ENCODE measurements at regions of chr1 and their contacts with region 1.

Region 1: GRCh38 chr1:234544087-234544579 is 65.2 kb upstream of the TARBP1 start:
- DNase-seq: peak in 1 of 2 experiments; percentile 58
- ATAC-seq: peak; percentile 65 to 68
- H3K4me3 ChIP-seq: no peak overlapping the region
- H3K27ac ChIP-seq: peak overlapping the region; percentile 57 to 73
- H3K4me1 ChIP-seq: peaks cover 53% of the 10 kb centered on the region
- CTCF ChIP-seq: no peak
- EP300 ChIP-seq: no peak
- POLR2A ChIP-seq: no peak
- RAD21 ChIP-seq: no peak

Region 2: DNA sequence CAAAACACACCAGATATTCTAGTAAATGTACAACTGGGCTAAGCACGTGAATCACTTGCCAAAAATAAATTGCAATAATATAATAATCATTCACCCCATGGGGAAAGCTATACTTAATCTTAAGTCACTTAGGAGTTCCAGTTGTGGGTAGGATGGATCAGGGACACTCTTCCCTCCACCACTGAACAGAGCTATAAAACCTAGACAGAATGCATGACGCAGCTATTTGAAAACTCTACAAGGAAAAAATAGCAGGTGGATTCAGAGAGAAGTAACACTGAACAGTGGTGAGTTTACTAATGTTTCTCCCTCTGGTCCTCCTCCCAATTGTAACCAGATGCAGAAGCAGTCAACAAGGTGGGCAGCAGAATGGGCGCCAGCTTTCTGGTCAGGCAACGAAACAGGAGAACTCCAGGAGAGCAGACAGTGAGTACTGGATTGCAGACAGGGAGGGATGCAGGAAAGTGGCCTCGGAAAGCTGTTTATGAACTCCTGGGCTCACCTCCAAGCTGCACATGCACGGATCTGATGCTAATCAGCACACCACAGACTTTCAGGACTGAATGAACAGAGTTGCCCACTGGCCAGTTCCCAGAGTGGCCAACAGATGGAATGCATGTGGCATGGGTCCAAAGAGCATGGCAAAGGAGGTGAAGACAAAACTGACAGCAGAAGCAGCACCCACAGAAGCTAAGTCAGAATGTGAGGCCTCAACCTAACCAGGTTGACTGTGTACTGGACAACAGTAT is 106.5 kb before region 1 on chr1:
- CTCF ChIA-PET with region 1: no interaction called
- POLR2A ChIA-PET with region 1: no interaction called
- DNase-seq: no peak
- ATAC-seq: no peak; a peak in 1 of 6 replicates
- H3K4me3 ChIP-seq: no peak overlapping the region
- H3K27ac ChIP-seq: no peak overlapping the region
- H3K4me1 ChIP-seq: peaks cover 9% of the 10 kb centered on the region; the same call in 2 of the 3 replicates
- CTCF ChIP-seq: no peak
- EP300 ChIP-seq: no peak
- POLR2A ChIP-seq: no peak
- RAD21 ChIP-seq: no peak

Region 3: GRCh38 chr1:234558016-234558836 is 14.1 kb after region 1 on chr1:
- CTCF ChIA-PET with region 1: interaction called, 25 read pairs
- POLR2A ChIA-PET with region 1: no interaction called
- DNase-seq: no peak
- ATAC-seq: no peak
- H3K4me3 ChIP-seq: no peak overlapping the region
- H3K27ac ChIP-seq: no peak overlapping the region
- H3K4me1 ChIP-seq: peaks cover 7% of the 10 kb centered on the region
- CTCF ChIP-seq: no peak
- EP300 ChIP-seq: no peak
- POLR2A ChIP-seq: no peak
- RAD21 ChIP-seq: no peak

Region 4: DNA sequence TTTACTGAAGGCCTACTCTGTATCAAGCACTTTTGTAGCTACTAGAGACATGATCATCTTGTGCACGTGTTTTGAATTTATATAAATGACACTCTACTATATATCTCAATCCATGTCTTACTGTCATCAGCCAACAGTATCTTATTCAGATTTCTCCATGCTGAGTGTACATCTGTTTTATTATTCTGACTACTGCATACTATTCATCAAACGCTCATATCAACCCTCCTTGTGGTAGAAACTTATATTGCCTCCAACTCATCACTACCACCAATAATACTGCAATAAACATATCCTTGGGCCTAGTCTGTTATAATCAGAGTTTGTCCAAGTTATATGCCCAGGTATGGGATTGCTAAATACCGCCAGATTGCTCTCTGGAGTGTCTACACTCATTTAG is 147.4 kb after region 1 on chr1:
- CTCF ChIA-PET with region 1: no interaction called
- POLR2A ChIA-PET with region 1: no interaction called
- DNase-seq: peak; percentile 22 to 45
- ATAC-seq: peak; percentile 76 to 77; a peak in 5 of 6 replicates
- H3K4me3 ChIP-seq: no peak overlapping the region
- H3K27ac ChIP-seq: no peak overlapping the region
- H3K4me1 ChIP-seq: no peaks in the 10 kb centered on the region
- CTCF ChIP-seq: no peak
- EP300 ChIP-seq: no peak
- POLR2A ChIP-seq: no peak
- RAD21 ChIP-seq: peak in 1 of 2 experiments; percentile 30; a peak in 1 of 5 replicates